ENCODE measurements at regions of chr11 and their contacts with region 1.

Region 1: GRCh38 chr11:85590848-85591483 is 36.2 kb downstream of the DLG2 start:
- DNase-seq: no peak
- H3K4me3 ChIP-seq: no peak overlapping the region
- CTCF ChIP-seq: no peak

Region 2: DNA sequence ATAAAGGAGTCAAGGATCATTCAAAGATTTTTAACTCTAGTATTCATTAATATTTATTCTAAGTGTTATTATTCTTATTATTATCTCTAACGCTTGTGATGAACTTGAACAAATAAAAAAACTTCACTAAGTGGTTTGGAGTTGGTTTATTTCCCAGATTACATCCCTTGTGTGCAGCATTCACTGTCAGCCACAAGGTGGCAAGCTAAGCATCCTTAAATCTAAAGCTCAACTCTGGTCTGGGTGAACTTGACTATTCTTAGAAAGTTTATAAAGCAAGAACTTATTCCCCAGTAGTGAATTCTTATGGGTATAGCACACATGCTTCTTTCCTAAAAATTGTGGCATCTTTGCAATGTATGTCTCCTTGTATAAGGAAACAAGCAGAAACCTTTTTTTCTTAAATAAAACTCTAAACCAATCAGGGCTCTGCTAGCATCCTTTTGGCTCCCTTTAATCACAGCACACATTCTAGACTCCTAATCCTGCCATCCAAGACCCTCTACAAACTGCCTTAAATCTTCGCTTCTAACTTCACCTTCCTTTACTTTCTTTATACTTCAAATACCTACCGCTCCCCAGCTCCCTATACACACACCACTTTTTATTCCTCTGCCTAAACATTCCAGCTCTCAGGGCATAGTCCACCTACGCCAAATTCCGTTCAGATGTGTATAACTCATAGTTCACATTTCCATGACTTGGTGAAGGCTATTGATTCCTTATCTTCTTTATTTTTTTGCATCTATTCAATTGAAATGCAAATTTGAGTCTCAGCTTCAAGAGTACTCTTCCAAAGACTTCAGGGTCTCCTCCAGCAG is 1032.7 kb before region 1 on chr11:
- CTCF ChIA-PET with region 1: interaction called, 35 read pairs
- POLR2A ChIA-PET with region 1: no interaction called
- DNase-seq: peak; percentile 28
- H3K4me3 ChIP-seq: no peak overlapping the region
- CTCF ChIP-seq: peak; percentile 71

Region 3: GRCh38 chr11:84780689-84781293 is 810.2 kb before region 1 on chr11:
- CTCF ChIA-PET with region 1: interaction called, 27 read pairs
- POLR2A ChIA-PET with region 1: no interaction called
- DNase-seq: peak; percentile 12
- H3K4me3 ChIP-seq: no peak overlapping the region
- CTCF ChIP-seq: peak; percentile 29

Region 4: DNA sequence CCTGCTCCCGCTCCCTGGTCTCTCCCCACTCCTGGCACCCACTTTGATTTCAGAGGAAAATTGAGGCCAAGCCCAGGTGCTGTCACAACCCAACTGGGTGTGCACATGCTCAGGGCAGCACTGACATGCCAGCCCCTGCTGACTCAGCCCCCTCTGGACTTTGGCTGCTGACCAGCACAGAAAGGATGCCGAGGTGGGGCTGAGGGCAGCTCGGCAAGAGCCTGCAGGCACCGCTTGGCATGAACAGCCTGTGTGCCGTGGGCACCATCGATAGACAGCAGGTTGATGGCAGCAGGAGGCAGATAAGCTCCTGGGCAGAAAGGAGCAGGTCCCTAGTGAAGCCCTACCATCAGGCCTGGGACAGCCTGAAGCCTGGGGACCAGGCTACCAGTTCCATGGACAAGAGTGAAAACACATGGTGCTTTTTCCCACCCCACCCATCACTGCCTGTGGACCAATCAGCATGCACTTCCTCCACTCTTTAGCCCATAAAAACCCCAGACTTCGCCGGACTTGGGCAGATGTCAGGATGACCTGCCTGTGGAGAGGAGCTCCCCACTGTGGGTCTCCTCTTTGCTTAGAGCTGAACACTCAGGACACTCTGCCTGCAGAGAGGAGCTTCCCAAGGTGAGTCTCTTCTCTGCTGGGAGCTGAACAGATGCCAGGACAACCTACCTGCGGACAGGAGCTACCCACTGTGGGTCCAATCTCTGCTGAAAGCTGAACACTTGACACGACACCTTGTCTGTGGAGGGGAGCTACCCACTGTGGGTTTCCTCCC is 796.1 kb before region 1 on chr11:
- CTCF ChIA-PET with region 1: interaction called, 57 read pairs
- POLR2A ChIA-PET with region 1: no interaction called
- DNase-seq: no peak
- H3K4me3 ChIP-seq: no peak overlapping the region
- CTCF ChIP-seq: no peak

Region 5: GRCh38 chr11:84800755-84801346 is 790.1 kb before region 1 on chr11:
- CTCF ChIA-PET with region 1: interaction called, 57 read pairs
- POLR2A ChIA-PET with region 1: no interaction called
- DNase-seq: peak; percentile 19
- H3K4me3 ChIP-seq: no peak overlapping the region
- CTCF ChIP-seq: peak; percentile 31

Region 6: GRCh38 chr11:85569525-85569924 is 21.4 kb before region 1 on chr11:
- CTCF ChIA-PET with region 1: no interaction called
- POLR2A ChIA-PET with region 1: no interaction called
- DNase-seq: no peak
- H3K4me3 ChIP-seq: no peak overlapping the region
- CTCF ChIP-seq: no peak

Measured in AG04449 (cell line).